OCI-LY7 (cell line): ENCODE measurements at regions of chr10 and their contacts with region 1.

Region 1: GRCh38 chr10:96959733-96960132 is 127.6 kb downstream of the LCOR start:
- DNase-seq: no peak
- H3K4me3 ChIP-seq: no peak overlapping the region
- H3K27ac ChIP-seq: no peak overlapping the region
- H3K4me1 ChIP-seq: no peaks in the 10 kb centered on the region
- CTCF ChIP-seq: no peak

Region 2: DNA sequence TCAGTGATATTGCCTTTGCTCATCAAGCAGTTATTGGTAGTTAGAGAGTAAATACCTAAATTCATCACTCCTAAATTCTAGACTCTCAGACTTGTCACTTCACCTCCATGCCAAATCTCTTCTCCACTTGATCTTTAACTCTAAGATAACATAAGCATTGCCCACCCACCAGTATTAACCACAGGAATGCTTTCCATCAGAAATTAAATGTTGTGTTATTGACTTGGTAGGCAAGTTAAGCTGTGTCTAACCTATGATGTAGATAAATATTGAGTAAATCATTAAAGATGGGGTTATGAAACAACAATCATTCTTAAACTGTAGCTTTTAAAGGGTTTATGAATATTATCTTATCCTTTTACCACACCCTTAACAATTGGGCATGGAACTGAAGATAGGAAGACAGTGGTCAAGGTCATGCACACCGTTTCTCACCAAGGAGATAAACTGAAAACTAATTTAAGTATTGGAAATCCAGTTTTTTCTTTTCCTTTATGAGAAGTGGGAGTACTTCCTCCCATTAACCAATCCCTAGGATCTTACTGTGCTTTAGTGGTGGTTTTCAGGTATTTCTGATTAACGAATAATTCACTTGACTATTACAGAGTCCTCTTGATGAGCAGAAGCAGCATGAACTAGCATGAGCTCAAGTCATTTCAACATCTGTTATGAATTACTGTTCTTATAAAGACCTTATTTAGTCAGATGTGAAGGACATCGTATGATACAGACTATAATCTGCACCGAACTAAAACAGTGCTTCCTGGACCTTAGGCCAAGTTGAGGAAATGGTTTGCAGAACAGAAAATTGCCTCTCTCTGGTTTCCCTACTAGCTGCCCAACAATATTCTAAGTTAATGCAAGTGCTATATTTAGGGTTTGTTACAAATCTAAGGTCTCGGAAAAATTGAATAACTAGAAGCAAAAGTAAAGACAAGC is 14.3 kb after region 1 on chr10:
- CTCF ChIA-PET with region 1: no interaction called
- POLR2A ChIA-PET with region 1: interaction called, 12 read pairs
- intact Hi-C with region 1: no loop called
- DNase-seq: peak; percentile 76
- H3K4me3 ChIP-seq: peak overlapping the region; percentile 10
- H3K27ac ChIP-seq: peak overlapping the region; percentile 77
- H3K4me1 ChIP-seq: peaks cover 41% of the 10 kb centered on the region
- CTCF ChIP-seq: no peak